CD4-positive, alpha-beta memory T cell (primary cell): ENCODE measurements at regions of chr4 and their contacts with region 1.

Region 1: GRCh38 chr4:38902695-38903094 is 35.1 kb downstream of the FAM114A1 start:
- DNase-seq: peak in 4 of 5 donors; percentile 40 to 60 (median 49)
- H3K4me3 ChIP-seq: no peak overlapping the region
- H3K4me3 Mint-ChIP-seq: no peak overlapping the region
- H3K27ac ChIP-seq: no peak overlapping the region
- H3K27ac Mint-ChIP-seq: no peak overlapping the region
- H3K4me1 ChIP-seq: no peaks in the 10 kb centered on the region
- H3K4me1 Mint-ChIP-seq: no peaks in the 10 kb centered on the region
- H3K27me3 ChIP-seq: no peaks in the 10 kb centered on the region
- H3K27me3 Mint-ChIP-seq: peaks cover 3 to 6% of the 10 kb centered on the region in 2 donors

Region 2: DNA sequence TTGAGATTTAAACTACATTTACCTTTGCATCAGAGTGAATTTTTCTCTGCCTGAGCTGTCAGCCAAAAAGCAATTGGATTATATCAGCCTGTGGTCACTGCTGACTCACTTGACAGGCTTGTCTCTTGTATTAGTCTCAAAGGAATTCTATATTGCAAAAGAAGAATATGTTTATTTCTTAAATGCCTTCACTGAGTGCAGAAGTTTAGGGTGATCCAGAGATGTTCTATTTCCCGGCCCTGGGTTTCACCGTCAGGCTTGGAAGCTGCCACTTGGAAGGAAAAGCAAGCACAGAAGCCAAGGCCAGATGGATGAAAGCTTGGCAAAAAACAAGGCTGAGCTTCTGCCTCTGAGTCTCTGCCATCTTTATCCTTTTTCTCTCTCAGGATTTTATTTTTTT is 45.9 kb after region 1 on chr4:
- CTCF ChIA-PET with region 1: interaction called, 16 read pairs
- POLR2A ChIA-PET with region 1: no interaction called
- intact Hi-C with region 1: no loop called
- DNase-seq: no peak
- H3K4me3 ChIP-seq: no peak overlapping the region
- H3K4me3 Mint-ChIP-seq: no peak overlapping the region
- H3K27ac ChIP-seq: no peak overlapping the region
- H3K27ac Mint-ChIP-seq: peak overlapping the region; percentile 83 to 100 (median 97)
- H3K4me1 ChIP-seq: peaks cover 21% of the 10 kb centered on the region
- H3K4me1 Mint-ChIP-seq: peaks cover 18 to 25% (median 19%) of the 10 kb centered on the region in 4 donors
- H3K27me3 ChIP-seq: no peaks in the 10 kb centered on the region
- H3K27me3 Mint-ChIP-seq: peaks cover 0 to 2% of the 10 kb centered on the region in 2 donors

Region 3: GRCh38 chr4:39044364-39044955 is 141.8 kb after region 1 on chr4:
- CTCF ChIA-PET with region 1: interaction called, 12 read pairs
- POLR2A ChIA-PET with region 1: interaction called, 6 read pairs
- intact Hi-C with region 1: loop called (anchors 5 kb)
- DNase-seq: peak; percentile 91 to 100 (median 95)
- H3K4me3 ChIP-seq: peak overlapping the region; percentile 18 to 57
- H3K4me3 Mint-ChIP-seq: peak overlapping the region; percentile 87 to 98 (median 92)
- H3K27ac ChIP-seq: peak overlapping the region; percentile 82
- H3K27ac Mint-ChIP-seq: peak overlapping the region; percentile 94 to 98 (median 97)
- H3K4me1 ChIP-seq: peaks cover 46% of the 10 kb centered on the region
- H3K4me1 Mint-ChIP-seq: peaks cover 39 to 60% (median 45%) of the 10 kb centered on the region in 4 donors
- H3K27me3 ChIP-seq: no peaks in the 10 kb centered on the region
- H3K27me3 Mint-ChIP-seq: no peaks in the 10 kb centered on the region

Region 4: DNA sequence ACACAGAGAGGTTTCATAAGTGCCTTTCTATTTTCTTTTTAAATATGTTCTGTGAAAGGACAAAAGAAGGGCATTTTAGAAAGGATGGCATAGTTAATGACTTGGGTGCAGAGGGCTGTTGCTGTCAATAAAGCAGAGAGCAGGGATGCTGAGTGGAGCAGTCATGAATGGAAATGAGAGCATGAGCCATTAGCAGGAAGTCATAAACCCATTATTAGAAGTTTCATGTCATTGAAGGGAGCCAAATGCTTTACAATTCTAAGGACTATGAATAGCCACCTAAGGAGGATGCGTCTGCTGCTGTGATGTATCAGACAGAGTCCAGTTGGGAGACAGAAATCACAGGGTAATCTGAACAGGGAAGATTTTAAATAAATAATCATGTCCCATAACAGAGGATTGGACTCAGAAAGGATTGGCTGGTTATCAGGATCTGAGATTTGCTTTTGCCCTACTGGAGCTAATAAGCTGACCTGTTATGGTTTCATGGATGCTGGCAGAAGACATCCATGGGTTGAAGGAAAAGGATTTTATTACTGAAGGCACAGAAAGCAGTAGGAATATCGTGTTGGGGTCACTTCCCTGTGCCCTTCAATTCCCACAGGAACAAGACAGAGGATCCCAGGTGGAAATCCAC is 232.1 kb after region 1 on chr4:
- CTCF ChIA-PET with region 1: interaction called, 242 read pairs
- POLR2A ChIA-PET with region 1: interaction called, 8 read pairs
- intact Hi-C with region 1: loop called (anchors 1 kb)
- DNase-seq: peak in 1 of 5 donors; percentile 5
- H3K4me3 ChIP-seq: no peak overlapping the region
- H3K4me3 Mint-ChIP-seq: no peak overlapping the region
- H3K27ac ChIP-seq: no peak overlapping the region
- H3K27ac Mint-ChIP-seq: peak overlapping the region in 4 of 7 donors; percentile 0 to 63 (median 45)
- H3K4me1 ChIP-seq: peaks cover 10% of the 10 kb centered on the region
- H3K4me1 Mint-ChIP-seq: peaks cover 9 to 12% (median 10%) of the 10 kb centered on the region in 4 donors
- H3K27me3 ChIP-seq: no peaks in the 10 kb centered on the region
- H3K27me3 Mint-ChIP-seq: no peaks in the 10 kb centered on the region

Region 5: GRCh38 chr4:39181905-39182638 is 279.4 kb after region 1 on chr4 and contains the start of gene WDR19:
- CTCF ChIA-PET with region 1: interaction called, 7 read pairs
- POLR2A ChIA-PET with region 1: no interaction called
- intact Hi-C with region 1: loop called (anchors 1 kb)
- DNase-seq: peak; percentile 98 to 99 (median 98)
- H3K4me3 ChIP-seq: peak within 1 kb of the TSS; percentile 78 to 95
- H3K4me3 Mint-ChIP-seq: no peak within 1 kb of the TSS
- H3K27ac ChIP-seq: peak within 1 kb of the TSS; percentile 65
- H3K27ac Mint-ChIP-seq: peak within 1 kb of the TSS in 2 of 7 donors; percentile 4 to 39
- H3K4me1 ChIP-seq: peaks cover 12% of the 10 kb centered on the region
- H3K4me1 Mint-ChIP-seq: peaks cover 3 to 9% (median 5%) of the 10 kb centered on the region in 4 donors
- H3K27me3 ChIP-seq: no peaks in the 10 kb centered on the region
- H3K27me3 Mint-ChIP-seq: peaks cover under 1 to 9% of the 10 kb centered on the region in 2 donors
- total RNA-seq, gene WDR19: 31.6 to 36.8 TPM

Region 6: GRCh38 chr4:39469429-39470077 is 566.9 kb after region 1 on chr4:
- CTCF ChIA-PET with region 1: no interaction called
- POLR2A ChIA-PET with region 1: no interaction called
- intact Hi-C with region 1: loop called (anchors 5 kb)
- DNase-seq: peak in 4 of 5 donors; percentile 45 to 58 (median 50)
- H3K4me3 ChIP-seq: no peak overlapping the region
- H3K4me3 Mint-ChIP-seq: no peak overlapping the region
- H3K27ac ChIP-seq: no peak overlapping the region
- H3K27ac Mint-ChIP-seq: peak overlapping the region in 3 of 7 donors; percentile 11 to 29 (median 22)
- H3K4me1 ChIP-seq: no peaks in the 10 kb centered on the region
- H3K4me1 Mint-ChIP-seq: peaks cover 0 to 1% (median 0%) of the 10 kb centered on the region in 4 donors
- H3K27me3 ChIP-seq: no peaks in the 10 kb centered on the region
- H3K27me3 Mint-ChIP-seq: no peaks in the 10 kb centered on the region

Region 7: GRCh38 chr4:40157436-40157835 is 1254.7 kb after region 1 on chr4:
- CTCF ChIA-PET with region 1: no interaction called
- POLR2A ChIA-PET with region 1: no interaction called
- intact Hi-C with region 1: no loop called
- DNase-seq: no peak
- H3K4me3 ChIP-seq: no peak overlapping the region
- H3K4me3 Mint-ChIP-seq: no peak overlapping the region
- H3K27ac ChIP-seq: no peak overlapping the region
- H3K27ac Mint-ChIP-seq: no peak overlapping the region
- H3K4me1 ChIP-seq: peaks cover 16% of the 10 kb centered on the region
- H3K4me1 Mint-ChIP-seq: peaks cover 9 to 12% (median 11%) of the 10 kb centered on the region in 4 donors
- H3K27me3 ChIP-seq: no peaks in the 10 kb centered on the region
- H3K27me3 Mint-ChIP-seq: no peaks in the 10 kb centered on the region